AG04449 (cell line): ENCODE measurements at regions of chr20 and their contacts with region 1.

Region 1: GRCh38 chr20:5168651-5169396 is 42.0 kb downstream of the CDS2 start:
- DNase-seq: no peak
- H3K4me3 ChIP-seq: no peak overlapping the region
- CTCF ChIP-seq: no peak

Region 2: GRCh38 chr20:5080384-5080877 is 88.4 kb before region 1 on chr20:
- CTCF ChIA-PET with region 1: no interaction called
- POLR2A ChIA-PET with region 1: no interaction called
- DNase-seq: no peak
- H3K4me3 ChIP-seq: no peak overlapping the region
- CTCF ChIP-seq: no peak

Region 3: GRCh38 chr20:5156675-5157448 is 12.0 kb before region 1 on chr20:
- CTCF ChIA-PET with region 1: interaction called, 13 read pairs
- POLR2A ChIA-PET with region 1: no interaction called
- DNase-seq: no peak
- H3K4me3 ChIP-seq: no peak overlapping the region
- CTCF ChIP-seq: no peak